ENCODE measurements at regions of chr14 and their contacts with region 1.

Region 1: GRCh38 chr14:81200054-81200453 is 20.7 kb downstream of the GTF2A1 start:
- DNase-seq: no peak
- ATAC-seq: peak; percentile 72
- H3K4me3 Mint-ChIP-seq: peak overlapping the region; percentile 12
- H3K27ac Mint-ChIP-seq: peak overlapping the region; percentile 61
- H3K4me1 Mint-ChIP-seq: peaks cover 16% of the 10 kb centered on the region
- H3K27me3 Mint-ChIP-seq: no peaks in the 10 kb centered on the region

Region 2: DNA sequence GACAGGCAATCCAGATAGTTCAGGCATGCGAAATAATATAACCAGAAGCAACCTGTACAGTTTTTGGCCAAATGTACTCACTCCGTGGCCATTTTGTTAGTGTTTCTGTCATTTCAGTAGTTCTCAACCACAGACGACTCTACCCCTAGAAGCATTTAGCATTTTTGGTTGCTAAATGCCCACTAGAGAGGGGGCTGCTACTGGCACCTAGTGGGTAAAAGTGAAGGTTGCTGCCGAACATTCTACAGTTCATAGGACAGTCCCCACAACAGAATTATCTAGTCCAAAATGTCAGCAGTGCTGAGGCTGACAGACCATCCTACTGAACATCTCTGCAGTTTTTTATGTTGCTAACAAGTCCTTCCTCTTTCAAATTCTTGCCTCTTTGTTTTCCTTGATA is 137.2 kb before region 1 on chr14:
- CTCF ChIA-PET with region 1: no interaction called
- POLR2A ChIA-PET with region 1: no interaction called
- DNase-seq: peak; percentile 26
- ATAC-seq: peak; percentile 44
- H3K4me3 Mint-ChIP-seq: no peak overlapping the region
- H3K27ac Mint-ChIP-seq: no peak overlapping the region
- H3K4me1 Mint-ChIP-seq: no peaks in the 10 kb centered on the region
- H3K27me3 Mint-ChIP-seq: peaks cover 4% of the 10 kb centered on the region

Region 3: DNA sequence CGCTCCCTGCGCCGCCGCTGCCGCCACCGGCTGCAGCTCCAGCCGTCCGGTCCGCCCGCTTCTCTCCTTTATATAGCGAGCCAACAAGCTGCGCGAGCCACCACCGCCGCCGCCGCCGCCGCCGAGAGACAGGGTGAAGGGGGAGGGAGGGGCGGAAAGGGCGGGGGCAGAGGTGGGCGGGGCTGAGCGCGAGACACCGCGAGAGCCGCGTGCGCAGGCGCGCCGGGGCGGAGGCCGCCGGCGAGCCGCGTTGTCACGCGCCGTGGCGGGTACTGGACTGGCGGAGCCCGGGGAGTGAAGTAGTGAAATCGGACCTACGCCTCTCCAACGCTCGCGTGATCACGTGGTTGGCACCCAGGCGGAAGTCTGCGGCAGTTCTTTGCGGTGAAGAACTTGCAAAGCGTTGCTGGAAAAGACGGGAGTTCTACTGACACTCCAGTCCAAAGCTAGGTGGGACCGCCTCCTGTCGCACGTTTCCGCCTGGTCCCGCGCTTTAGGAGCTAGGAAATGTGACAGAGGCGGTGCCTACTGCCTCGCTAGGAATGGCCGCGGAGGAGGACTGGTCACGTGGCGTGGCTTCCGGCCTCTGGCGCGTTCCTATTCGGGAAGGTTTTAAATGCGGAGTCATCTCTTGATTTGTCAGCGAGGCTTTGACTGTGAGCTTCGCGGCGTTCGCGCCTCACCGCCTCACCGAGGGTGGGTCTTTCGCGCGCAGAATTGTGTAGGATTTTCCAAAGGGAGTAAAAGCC is 20.9 kb after region 1 on chr14 and contains the start of gene GTF2A1:
- CTCF ChIA-PET with region 1: interaction called, 3 read pairs
- POLR2A ChIA-PET with region 1: interaction called, 12 read pairs
- DNase-seq: peak; percentile 94
- ATAC-seq: peak; percentile 80
- H3K4me3 Mint-ChIP-seq: peak within 1 kb of the TSS; percentile 97
- H3K27ac Mint-ChIP-seq: peak within 1 kb of the TSS; percentile 98
- H3K4me1 Mint-ChIP-seq: peaks cover 31% of the 10 kb centered on the region
- H3K27me3 Mint-ChIP-seq: peaks cover 2% of the 10 kb centered on the region
- total RNA-seq, gene GTF2A1: 33.6 to 33.7 TPM

Region 4: DNA sequence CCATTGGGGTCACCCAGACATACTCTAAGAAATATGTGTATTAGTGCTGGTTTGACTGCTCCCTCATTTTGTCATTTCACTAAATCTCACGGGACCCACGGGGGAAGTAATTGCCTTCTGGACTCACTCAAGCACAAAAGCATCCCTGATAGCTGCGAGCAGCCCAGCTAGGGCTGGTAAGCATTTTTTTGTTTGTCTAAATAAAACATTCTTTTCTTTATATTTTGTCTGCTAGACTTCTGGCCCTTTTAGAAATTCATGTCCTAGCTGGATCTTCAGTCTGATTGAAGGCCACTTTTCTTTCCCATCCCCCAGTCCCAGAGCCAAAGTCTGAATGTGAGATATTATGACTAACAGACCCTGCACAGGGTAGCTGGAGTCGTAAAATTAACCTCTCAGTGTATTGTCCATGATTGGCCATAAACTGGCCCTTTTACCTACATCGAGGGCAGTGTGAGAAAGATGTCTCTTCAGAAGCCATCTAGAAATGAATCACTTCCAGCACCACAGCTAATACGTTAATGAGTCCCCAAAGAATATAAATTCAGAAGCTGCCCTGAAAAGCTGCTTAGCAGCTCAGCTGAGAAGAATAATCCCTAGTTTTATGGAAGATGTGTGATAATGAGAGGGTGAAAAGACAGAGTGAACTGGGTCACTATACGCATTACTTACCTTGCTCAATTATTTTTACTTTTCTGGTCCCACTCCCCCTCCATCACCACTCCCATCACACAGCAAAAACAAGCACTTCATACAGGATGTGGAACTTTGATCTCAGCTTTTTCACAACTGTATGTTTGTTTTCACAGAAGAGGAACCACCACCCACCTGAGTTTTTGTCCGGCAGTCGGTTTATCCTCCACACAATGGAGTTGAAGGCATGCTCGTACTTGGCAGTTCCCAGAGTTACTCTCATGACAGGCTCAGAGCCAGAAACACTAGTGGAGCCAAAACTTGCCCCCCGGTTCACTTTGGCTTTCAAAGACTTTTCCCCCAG is 76.3 kb after region 1 on chr14:
- CTCF ChIA-PET with region 1: no interaction called
- POLR2A ChIA-PET with region 1: no interaction called
- DNase-seq: no peak
- ATAC-seq: no peak
- H3K4me3 Mint-ChIP-seq: no peak overlapping the region
- H3K27ac Mint-ChIP-seq: no peak overlapping the region
- H3K4me1 Mint-ChIP-seq: no peaks in the 10 kb centered on the region
- H3K27me3 Mint-ChIP-seq: no peaks in the 10 kb centered on the region

Region 5: DNA sequence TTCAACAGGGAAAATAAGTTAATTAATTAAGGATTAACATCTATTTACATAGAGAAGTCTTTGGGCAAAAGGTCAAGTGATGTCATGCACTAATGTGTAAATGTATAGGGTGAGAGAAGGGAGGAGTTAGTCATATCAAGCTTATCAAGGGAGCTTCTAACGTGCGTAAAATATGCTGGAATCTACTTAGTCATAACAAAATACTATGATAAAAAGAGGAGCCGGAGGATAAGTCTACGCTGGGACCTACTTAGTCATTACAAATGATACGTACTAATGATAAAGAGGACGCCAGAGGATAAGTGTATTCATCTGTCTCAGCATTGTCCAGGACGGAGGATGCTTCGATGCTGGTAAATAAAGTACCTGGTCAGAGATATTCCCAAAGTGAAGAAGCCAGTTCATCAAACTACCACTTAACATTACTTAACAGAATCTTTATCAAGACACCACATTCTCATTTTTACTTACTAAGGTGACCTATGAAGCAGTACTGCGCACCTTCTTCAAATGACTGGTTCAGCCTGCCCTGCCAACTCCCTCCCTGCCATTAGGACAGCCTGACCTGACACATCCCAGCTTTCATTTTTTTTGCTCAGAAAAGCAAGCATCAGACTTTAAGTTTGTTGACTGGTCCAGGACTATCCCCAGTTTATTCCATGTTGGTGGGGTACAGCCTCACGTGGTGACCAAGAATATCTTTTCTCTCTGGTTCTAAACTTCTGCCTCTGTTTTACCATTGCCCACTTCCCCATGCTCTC is 87.1 kb after region 1 on chr14:
- CTCF ChIA-PET with region 1: no interaction called
- POLR2A ChIA-PET with region 1: no interaction called
- DNase-seq: no peak
- ATAC-seq: no peak
- H3K4me3 Mint-ChIP-seq: no peak overlapping the region
- H3K27ac Mint-ChIP-seq: no peak overlapping the region
- H3K4me1 Mint-ChIP-seq: no peaks in the 10 kb centered on the region
- H3K27me3 Mint-ChIP-seq: peaks cover 5% of the 10 kb centered on the region

Region 6: DNA sequence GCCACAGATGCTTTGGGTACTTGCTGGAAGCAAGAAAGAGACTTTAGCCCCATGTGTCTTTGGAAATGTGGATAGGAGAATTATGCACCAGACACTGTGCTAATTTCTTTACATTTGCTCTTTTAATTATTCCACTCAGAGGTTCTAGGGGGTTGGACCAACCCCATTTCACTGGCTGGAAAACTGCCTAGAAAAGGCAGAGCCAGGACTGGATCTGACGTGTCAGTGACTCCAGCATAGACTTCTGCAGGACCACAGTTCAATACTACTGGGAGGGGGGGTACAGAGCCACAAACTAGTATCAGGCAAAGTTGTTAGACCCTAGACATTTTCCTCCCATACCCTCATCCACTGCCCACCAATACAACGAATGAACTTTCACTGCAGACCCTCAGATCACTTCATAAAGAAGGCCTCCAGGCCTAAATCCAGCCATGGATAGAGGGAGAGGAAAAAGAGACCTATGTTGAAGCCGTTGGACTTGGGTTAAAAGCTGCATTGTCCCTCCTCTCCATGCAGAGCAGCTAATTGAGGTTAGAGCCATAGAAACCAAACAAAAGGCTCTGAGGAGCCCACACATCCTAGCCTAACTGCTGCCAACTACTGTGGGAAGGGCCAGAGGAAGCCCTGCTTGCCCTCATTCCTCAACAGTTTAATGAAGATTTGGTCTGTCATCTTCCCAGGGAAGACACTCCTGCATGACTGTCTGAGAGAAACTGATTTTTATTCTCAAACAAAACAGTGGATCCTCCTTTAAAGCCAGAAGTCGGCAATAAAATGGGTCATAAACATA is 131.4 kb after region 1 on chr14:
- CTCF ChIA-PET with region 1: no interaction called
- POLR2A ChIA-PET with region 1: no interaction called
- DNase-seq: no peak
- ATAC-seq: no peak
- H3K4me3 Mint-ChIP-seq: no peak overlapping the region
- H3K27ac Mint-ChIP-seq: no peak overlapping the region
- H3K4me1 Mint-ChIP-seq: no peaks in the 10 kb centered on the region
- H3K27me3 Mint-ChIP-seq: peaks cover 3% of the 10 kb centered on the region